Activated CD4-positive, alpha-beta T cell treated with anti-CD3 and anti-CD28 coated beads for 36 hours (primary cell): ENCODE measurements at regions of chr6 and their contacts with region 1.

Region 1: DNA sequence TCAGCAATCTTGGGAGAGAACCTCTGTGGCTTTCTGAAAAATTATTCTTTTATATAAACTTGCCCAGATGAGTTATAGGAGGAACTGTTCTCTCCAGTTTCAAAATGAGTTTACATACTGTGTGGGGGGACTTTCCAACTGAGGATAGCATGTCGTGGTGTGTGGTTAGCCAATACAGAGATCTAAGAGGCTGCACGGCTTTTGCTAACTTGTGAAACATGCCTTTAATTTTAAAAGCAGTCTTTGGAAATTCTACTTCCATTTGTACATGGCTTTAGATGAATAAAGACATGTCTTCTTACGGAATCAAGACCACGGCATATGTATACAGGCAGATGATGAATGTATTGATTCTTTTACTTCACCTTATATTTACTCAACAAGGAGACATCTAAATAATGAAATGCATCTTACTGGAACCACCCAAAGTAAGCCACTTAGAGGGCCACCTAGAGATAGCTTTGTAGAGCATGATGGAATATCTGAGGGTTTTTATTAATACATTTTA is 39.8 kb downstream of the HIVEP1 start:
- DNase-seq: peak; percentile 80
- ATAC-seq: peak; percentile 91
- H3K4me3 Mint-ChIP-seq: peak overlapping the region; percentile 53
- H3K27ac Mint-ChIP-seq: peak overlapping the region; percentile 94
- H3K4me1 Mint-ChIP-seq: peaks cover 76% of the 10 kb centered on the region
- H3K27me3 Mint-ChIP-seq: no peaks in the 10 kb centered on the region

Region 2: GRCh38 chr6:12233693-12234571 is 182.0 kb after region 1 on chr6:
- CTCF ChIA-PET with region 1: no interaction called
- POLR2A ChIA-PET with region 1: no interaction called
- intact Hi-C with region 1: loop called in 1 of 2 experiments (anchors 5 kb)
- DNase-seq: peak; percentile 43
- ATAC-seq: peak; percentile 93
- H3K4me3 Mint-ChIP-seq: no peak overlapping the region
- H3K27ac Mint-ChIP-seq: no peak overlapping the region
- H3K4me1 Mint-ChIP-seq: peaks cover 40% of the 10 kb centered on the region
- H3K27me3 Mint-ChIP-seq: no peaks in the 10 kb centered on the region

Region 3: DNA sequence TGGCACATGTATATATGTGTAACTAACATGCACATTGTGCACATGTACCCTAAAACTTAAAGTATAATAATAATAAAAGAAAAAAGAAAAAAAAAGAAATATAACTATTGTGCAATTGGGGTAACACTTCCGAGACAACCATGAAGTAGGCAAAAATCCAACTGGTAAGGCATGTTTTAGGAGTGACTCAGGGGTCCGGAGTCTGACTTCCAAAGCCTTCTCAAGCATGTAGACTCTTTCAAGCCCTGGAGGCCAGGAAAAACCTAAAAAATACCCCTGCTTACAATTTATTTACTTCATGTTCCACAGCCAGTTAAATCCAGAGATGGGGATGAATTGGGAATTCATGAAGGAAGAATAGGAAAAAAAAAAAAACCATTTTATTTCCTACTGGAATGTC is 503.4 kb after region 1 on chr6:
- CTCF ChIA-PET with region 1: no interaction called
- POLR2A ChIA-PET with region 1: no interaction called
- intact Hi-C with region 1: no loop called
- DNase-seq: no peak
- ATAC-seq: no peak
- H3K4me3 Mint-ChIP-seq: no peak overlapping the region
- H3K27ac Mint-ChIP-seq: no peak overlapping the region
- H3K4me1 Mint-ChIP-seq: no peaks in the 10 kb centered on the region
- H3K27me3 Mint-ChIP-seq: peaks cover 2% of the 10 kb centered on the region